Right ventricle myocardium inferior (tissue), 1 donor: ENCODE measurements at regions of chr5 and their contacts with region 1.

Region 1: DNA sequence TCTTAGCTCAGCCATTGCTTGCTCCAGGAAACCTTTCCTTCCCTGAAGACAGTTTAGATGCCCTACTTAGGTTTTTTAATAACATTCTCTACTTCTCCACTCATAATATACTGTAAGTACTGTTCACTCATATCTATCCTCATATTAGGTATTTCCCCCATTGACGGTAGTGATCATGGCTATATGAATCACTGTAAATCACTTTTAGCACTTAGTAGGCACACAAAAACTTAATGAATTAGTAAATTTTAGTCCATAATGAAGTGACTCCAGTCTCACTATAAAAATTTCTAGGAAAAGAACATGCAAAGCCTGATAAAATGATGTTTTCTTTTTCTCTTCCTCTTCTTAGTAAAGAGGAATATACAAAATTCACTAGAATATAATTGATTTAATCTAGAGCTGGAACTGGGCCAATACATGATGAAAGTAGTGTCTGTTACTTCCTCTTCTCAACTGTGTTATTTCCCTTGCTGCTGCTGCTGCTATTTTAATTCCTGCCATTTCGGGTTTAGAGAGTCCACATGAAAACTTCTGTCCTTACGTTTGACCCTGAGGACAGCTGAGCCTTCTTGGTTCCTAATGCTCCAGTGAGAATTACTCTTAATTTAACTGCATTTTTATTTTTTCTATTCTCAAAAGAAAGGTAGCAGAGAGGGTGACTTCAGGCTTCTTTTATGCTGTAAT is 73.5 kb downstream of the LNPEP start:
- DNase-seq: no peak
- ATAC-seq: peak; percentile 42

Region 2: DNA sequence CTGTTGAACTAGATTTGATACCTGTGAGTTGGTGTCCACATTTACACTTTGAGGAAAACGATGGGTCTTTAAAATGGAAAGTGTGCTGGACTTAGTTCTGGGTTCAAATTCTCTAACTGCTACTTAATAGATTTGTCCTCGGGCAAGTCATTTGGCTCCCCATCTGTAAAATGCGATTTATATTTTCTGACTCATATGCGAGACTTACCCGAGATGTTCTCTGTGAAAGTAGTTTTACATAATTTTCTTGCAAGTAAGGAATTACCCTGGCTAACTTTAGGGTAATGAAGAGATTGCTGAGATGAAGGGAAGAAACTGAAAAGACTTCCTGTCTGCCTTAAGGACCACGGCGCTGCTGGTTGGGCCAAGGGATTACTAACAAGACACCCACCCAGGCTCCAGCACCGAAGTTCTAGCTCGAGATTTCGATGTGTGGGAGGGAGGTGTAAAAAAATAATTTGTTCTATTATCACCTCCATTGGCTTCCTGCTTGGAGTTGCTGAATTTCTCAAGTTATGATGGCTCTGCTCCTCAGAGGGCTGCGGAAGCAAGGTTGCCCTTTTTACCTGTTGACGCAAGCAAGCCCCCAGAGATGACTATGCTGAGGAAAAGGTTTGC is 600.4 kb before region 1 on chr5:
- intact Hi-C with region 1: no loop called
- DNase-seq: no peak
- ATAC-seq: no peak

Region 3: DNA sequence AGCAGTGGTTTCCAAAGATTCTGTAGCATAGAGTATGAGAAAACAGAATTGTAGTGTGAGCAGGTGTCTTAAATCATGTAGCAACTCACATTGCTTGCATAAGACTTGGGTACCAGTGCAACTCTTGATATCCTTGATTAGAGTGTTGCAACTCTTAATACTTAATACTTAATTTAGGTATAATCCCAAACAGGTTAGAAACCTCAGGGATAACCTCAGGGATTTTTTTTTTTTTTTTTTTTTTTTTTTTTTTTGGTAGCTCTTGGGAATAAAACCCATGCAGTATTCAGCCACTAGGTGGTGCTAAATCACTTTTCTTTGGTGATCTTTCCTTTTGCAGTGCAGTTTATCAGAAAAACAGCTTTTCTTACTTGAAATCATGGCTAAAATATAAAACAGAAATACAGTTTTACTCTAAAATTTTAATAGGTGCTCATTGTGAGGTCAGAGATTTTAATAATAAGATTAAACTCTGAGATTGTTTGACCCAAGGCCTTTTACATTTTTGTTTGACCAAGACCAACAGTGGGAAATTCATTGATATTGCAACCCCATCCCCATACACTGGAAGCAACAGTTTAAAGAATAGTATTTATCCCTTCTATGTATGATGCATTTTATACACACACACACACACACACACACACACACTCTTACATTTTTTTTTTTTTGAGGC is 256.9 kb before region 1 on chr5:
- intact Hi-C with region 1: loop called (anchors 10 kb)
- DNase-seq: no peak
- ATAC-seq: no peak